ENCODE measurements at regions of chr4 and their contacts with region 1.

Region 1: DNA sequence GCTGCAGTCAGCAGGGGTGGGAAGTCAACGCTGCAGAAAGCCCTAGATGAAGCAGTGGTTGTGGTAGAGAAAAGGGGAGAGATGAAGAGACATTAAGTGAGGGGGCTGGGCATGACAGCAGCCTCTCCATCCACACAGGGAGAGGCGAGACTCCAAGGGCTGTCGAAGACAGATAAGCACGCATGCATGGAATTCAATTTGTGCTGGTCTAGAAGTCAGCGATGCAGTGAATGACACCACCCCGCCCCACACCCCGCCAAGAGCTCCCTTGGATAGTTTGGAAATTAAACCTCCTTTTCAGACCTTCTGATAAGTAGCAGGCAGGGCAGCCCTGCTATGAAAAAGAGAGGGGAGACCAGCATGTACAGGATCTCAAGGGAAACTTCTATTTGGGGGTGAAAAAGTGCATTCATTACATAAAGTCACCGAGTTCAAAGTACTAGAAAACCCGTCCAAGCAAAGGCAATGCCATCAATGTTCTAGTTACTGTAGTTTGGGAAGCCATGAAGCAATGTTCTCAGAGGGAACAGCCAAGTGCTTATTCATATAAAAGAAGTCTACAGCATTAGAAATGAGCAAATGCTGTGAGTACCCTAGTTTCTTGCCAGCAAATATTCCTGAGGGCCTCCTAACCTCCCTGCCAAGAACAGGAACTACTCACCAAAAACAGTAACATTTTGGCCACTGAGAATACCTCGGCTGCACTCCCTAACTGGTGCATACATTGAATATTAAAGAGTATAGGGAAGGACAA is 152.3 kb upstream of the ANXA10 start:
- DNase-seq: no peak
- H3K4me3 ChIP-seq: no peak overlapping the region
- H3K27ac ChIP-seq: no peak overlapping the region
- H3K4me1 ChIP-seq: peaks cover 0 to 14% (median 0%) of the 10 kb centered on the region in 4 donors
- H3K27me3 ChIP-seq: no peaks in the 10 kb centered on the region
- CTCF ChIP-seq: no peak
- EP300 ChIP-seq: no peak
- POLR2A ChIP-seq: no peak

Region 2: DNA sequence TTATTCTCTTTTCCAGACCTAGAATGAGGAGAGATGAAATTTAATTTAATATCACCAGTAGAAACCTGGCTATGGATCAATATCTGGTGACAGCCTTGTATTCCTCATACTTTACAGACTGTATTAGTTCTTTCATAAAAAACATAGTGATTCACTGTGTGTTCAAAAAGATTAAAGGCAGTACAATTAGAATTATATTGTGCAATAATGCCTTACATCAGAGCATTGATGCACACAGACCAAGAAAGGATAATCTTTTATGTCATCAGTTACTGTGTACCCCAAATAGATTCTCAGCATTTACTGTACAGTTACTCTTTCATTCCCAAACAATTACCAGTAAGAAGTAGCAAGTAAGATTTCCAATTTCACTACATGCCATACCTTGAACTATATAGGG is 108.2 kb before region 1 on chr4:
- intact Hi-C with region 1: no loop called
- DNase-seq: no peak
- H3K4me3 ChIP-seq: no peak overlapping the region
- H3K27ac ChIP-seq: no peak overlapping the region
- H3K4me1 ChIP-seq: no peaks in the 10 kb centered on the region
- H3K27me3 ChIP-seq: no peaks in the 10 kb centered on the region
- CTCF ChIP-seq: no peak
- EP300 ChIP-seq: no peak
- POLR2A ChIP-seq: no peak

Region 3: GRCh38 chr4:167854881-167855280 is 85.2 kb before region 1 on chr4:
- intact Hi-C with region 1: no loop called
- DNase-seq: no peak
- H3K4me3 ChIP-seq: no peak overlapping the region
- H3K27ac ChIP-seq: no peak overlapping the region
- H3K4me1 ChIP-seq: no peaks in the 10 kb centered on the region
- H3K27me3 ChIP-seq: no peaks in the 10 kb centered on the region
- CTCF ChIP-seq: no peak
- EP300 ChIP-seq: no peak
- POLR2A ChIP-seq: no peak

Region 4: GRCh38 chr4:167956676-167957075 is 16.6 kb after region 1 on chr4:
- intact Hi-C with region 1: loop called (anchors 1 kb)
- DNase-seq: no peak
- H3K4me3 ChIP-seq: no peak overlapping the region
- H3K27ac ChIP-seq: no peak overlapping the region
- H3K4me1 ChIP-seq: peaks cover 0 to 10% (median 2%) of the 10 kb centered on the region in 4 donors
- H3K27me3 ChIP-seq: no peaks in the 10 kb centered on the region
- CTCF ChIP-seq: no peak
- EP300 ChIP-seq: no peak
- POLR2A ChIP-seq: no peak

Measured in sigmoid colon (tissue), 7 donors.